PC-9 (cell line): ENCODE measurements at regions of chr14 and their contacts with region 1.

Region 1: GRCh38 chr14:49959822-49960408 is 67.0 kb downstream of the ARF6 start:
- DNase-seq: peak; percentile 70 to 88
- H3K4me3 ChIP-seq: no peak overlapping the region
- H3K27ac ChIP-seq: peak overlapping the region; percentile 88
- H3K4me1 ChIP-seq: peaks cover 53% of the 10 kb centered on the region
- H3K27me3 ChIP-seq: no peaks in the 10 kb centered on the region
- CTCF ChIP-seq: no peak

Region 2: GRCh38 chr14:49867831-49868723 is 91.8 kb before region 1 on chr14:
- CTCF ChIA-PET with region 1: interaction called, 3 read pairs
- POLR2A ChIA-PET with region 1: interaction called, 5 read pairs
- intact Hi-C with region 1: loop called (anchors 2 kb)
- DNase-seq: peak; percentile 88 to 94
- H3K4me3 ChIP-seq: peak overlapping the region; percentile 85
- H3K27ac ChIP-seq: peak overlapping the region; percentile 78
- H3K4me1 ChIP-seq: peaks cover 32% of the 10 kb centered on the region
- H3K27me3 ChIP-seq: no peaks in the 10 kb centered on the region
- CTCF ChIP-seq: no peak

Region 3: GRCh38 chr14:49920935-49921334 is 39.0 kb before region 1 on chr14:
- CTCF ChIA-PET with region 1: no interaction called
- POLR2A ChIA-PET with region 1: no interaction called
- intact Hi-C with region 1: no loop called
- DNase-seq: no peak
- H3K4me3 ChIP-seq: no peak overlapping the region
- H3K27ac ChIP-seq: no peak overlapping the region
- H3K4me1 ChIP-seq: 0 out of 2 replicates have a peak, but pooled peaks cover 6% of the 10 kb centered on the region
- H3K27me3 ChIP-seq: no peaks in the 10 kb centered on the region
- CTCF ChIP-seq: no peak

Region 4: DNA sequence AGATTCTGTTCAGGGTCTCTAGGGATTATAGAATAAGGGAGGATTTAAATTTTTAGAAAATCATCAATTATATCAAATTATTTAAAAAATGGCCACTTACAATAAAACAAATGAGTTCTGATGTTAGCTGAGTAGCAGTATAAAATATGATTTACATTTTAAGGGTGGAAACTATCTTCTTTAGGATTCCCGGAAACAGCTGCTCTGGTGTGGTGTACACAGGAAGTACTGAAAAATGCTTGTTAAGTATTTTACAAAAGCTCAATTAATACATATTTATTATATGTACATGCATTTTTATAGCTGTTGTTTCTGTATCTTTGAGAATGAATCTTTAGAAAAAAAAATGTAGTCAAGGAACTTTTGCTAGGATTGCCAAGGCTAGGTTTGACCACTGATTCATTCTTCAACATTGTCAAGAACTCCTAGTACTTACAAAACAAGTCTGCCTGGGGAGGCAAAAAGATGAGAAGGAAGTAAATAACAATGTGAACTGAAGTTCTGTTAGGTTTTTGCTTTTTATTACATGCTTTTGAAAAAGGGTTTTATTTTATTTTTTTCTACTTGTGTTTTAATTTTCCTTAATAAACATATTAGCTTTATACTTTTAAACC is 19.0 kb before region 1 on chr14:
- CTCF ChIA-PET with region 1: no interaction called
- POLR2A ChIA-PET with region 1: interaction called, 18 read pairs
- intact Hi-C with region 1: no loop called
- DNase-seq: peak in 1 of 2 experiments; percentile 85
- H3K4me3 ChIP-seq: no peak overlapping the region
- H3K27ac ChIP-seq: peak overlapping the region; percentile 42
- H3K4me1 ChIP-seq: peaks cover 29% of the 10 kb centered on the region
- H3K27me3 ChIP-seq: no peaks in the 10 kb centered on the region
- CTCF ChIP-seq: no peak

Region 5: DNA sequence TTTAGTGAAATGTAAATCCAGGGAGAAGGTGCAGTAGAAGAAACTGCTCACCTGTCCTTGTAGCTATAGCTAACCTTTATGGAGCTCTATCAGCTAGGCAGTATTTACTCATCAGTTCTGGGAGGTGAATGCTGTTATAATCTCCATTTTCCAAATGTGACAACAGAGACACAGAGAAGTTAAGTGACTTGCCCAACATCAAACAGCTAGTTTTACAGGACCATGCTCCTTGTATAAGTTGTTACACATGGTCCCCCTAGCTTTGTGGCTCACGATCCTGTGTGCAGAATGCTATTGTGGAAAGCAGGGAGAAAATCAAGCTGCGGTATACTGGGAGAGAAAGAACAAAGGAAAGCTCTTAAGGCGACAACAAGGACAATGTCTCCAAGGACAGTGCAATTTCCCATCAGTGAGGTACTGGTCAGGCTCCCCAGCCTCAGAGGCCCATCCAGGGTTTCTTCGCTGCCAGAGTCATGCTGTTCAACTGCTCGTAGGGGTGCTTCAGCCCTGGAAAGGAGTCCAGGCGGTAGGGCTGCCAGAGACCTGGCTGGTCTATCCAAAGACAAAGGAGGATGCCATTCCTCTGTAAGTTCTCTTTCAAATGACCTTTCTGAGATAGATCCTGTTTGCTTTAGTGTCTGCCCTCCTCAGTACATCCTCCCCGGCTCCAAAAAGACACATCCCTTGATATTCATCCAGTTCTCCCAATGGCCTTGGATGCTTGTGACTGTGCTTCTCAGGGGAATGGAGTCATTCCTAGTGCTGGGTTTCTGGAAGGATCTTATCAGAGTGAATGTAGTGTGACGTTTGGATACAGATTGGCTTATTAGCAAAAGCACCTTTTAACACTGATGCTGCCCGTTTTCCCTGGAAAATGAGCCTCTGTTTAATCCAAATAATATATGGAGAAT is 28.4 kb after region 1 on chr14:
- CTCF ChIA-PET with region 1: no interaction called
- POLR2A ChIA-PET with region 1: interaction called, 13 read pairs
- intact Hi-C with region 1: no loop called
- DNase-seq: no peak
- H3K4me3 ChIP-seq: no peak overlapping the region
- H3K27ac ChIP-seq: peak overlapping the region; percentile 76
- H3K4me1 ChIP-seq: peaks cover 43% of the 10 kb centered on the region
- H3K27me3 ChIP-seq: no peaks in the 10 kb centered on the region
- CTCF ChIP-seq: no peak

Region 6: GRCh38 chr14:50038398-50039119 is 78.6 kb after region 1 on chr14:
- CTCF ChIA-PET with region 1: no interaction called
- POLR2A ChIA-PET with region 1: interaction called, 15 read pairs
- intact Hi-C with region 1: no loop called
- DNase-seq: peak in 1 of 2 experiments; percentile 79
- H3K4me3 ChIP-seq: no peak overlapping the region
- H3K27ac ChIP-seq: peak overlapping the region; percentile 98
- H3K4me1 ChIP-seq: peaks cover 78% of the 10 kb centered on the region
- H3K27me3 ChIP-seq: no peaks in the 10 kb centered on the region
- CTCF ChIP-seq: no peak; the same call in 1 of the 2 replicates

Region 7: DNA sequence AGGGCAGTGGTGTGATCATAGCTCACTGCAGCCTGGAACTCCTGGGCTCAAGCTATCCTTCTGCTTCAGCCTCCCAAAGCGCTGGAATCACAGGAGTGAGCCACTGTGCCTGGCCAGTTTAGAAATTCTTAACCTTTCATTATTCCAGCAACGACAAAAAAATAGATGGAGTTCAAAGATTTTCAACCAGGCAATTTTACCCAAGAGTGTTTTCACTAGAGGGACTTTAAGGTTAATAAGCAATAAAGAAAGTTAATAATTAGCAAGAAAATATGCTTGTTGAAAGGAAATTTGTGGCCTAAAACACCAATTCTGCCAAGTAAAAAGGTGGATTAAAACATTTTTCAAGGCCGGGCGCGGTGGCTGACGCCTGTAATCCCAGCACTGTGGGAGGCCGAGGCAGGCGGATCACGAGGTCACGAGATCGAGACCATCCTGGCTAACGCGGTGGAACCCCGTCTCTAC is 421.9 kb after region 1 on chr14:
- CTCF ChIA-PET with region 1: interaction called, 14 read pairs
- POLR2A ChIA-PET with region 1: no interaction called
- intact Hi-C with region 1: no loop called
- DNase-seq: no peak
- H3K4me3 ChIP-seq: no peak overlapping the region
- H3K27ac ChIP-seq: no peak overlapping the region
- H3K4me1 ChIP-seq: no peaks in the 10 kb centered on the region
- H3K27me3 ChIP-seq: no peaks in the 10 kb centered on the region
- CTCF ChIP-seq: no peak